Activated CD4-positive, alpha-beta T cell treated with anti-CD3 and anti-CD28 coated beads, Interleukin-2, amount 10 ng/mL, durations not matched to agents 24 days and 14 days (primary cell): ENCODE measurements at regions of chr1 and their contacts with region 1.

Region 1: GRCh38 chr1:241592273-241592958 is 47.8 kb downstream of the CHML start:
- DNase-seq: no peak
- H3K4me3 Mint-ChIP-seq: no peak overlapping the region
- H3K27ac Mint-ChIP-seq: peak overlapping the region; percentile 19
- H3K4me1 Mint-ChIP-seq: peaks cover 3% of the 10 kb centered on the region
- H3K27me3 Mint-ChIP-seq: no peaks in the 10 kb centered on the region

Region 2: DNA sequence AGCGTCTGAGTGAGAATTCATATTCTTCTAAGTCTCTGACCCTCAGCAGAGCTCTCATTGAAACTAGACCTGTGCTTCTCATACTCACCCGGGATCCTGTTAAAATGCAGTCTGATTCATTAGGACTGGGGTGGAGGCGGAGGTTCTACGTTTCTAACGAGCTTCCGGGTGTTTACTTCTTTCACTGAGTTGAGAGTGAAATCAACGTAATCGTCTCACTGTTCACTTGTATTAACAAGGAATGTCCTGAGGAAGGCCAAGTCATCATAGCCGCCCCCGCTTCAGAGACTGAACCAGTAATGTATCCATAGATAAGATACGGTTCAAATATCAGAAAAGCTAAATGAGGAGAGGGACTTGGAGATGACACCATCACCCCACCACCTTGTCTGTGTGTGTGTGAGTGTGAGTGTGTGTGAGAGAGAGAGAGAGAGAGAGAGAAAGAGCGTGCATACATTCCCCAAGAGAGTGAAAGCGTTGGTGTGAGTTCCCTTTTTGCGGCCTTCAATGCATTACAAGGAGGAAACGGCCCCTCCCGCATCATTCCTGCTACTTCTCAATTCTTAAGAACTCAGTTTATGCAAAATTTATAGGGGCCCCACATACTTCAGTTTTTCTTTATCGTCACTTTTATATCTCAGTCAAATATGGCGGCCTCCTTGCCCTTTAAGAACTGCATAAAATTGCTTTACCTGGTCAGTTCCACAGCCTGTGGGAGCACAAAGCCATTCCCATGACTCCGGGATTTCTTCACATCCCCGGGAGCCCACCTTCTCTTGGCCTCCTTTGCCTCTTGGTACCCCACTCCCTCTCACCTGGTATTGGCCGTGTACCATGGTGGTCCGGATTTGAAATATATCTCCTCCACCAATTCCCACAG is 40.4 kb before region 1 on chr1:
- intact Hi-C with region 1: loop called (anchors 1 kb)
- DNase-seq: peak; percentile 77
- H3K4me3 Mint-ChIP-seq: peak overlapping the region; percentile 82
- H3K27ac Mint-ChIP-seq: peak overlapping the region; percentile 89
- H3K4me1 Mint-ChIP-seq: peaks cover 15% of the 10 kb centered on the region
- H3K27me3 Mint-ChIP-seq: peaks cover 2% of the 10 kb centered on the region

Region 3: DNA sequence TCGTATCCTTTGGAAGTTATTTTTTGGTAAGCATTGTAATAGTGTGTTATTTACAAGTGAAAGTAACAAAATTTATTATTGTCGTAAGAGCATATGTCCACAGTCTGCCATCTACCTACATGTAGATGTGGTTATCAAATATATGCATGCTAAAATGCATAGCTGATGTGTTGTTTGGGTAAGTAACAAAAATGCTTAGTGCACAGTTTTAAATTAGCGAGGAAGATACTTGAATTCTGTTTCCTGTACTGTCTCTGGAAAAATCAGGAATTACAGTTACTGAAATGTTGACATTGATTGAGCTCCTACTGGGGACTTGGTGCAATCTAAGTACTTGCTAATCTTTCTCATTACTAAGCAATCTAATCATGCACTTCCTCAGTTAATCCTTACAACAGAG is 74.0 kb after region 1 on chr1:
- intact Hi-C with region 1: no loop called
- DNase-seq: no peak
- H3K4me3 Mint-ChIP-seq: no peak overlapping the region
- H3K27ac Mint-ChIP-seq: no peak overlapping the region
- H3K4me1 Mint-ChIP-seq: no peaks in the 10 kb centered on the region
- H3K27me3 Mint-ChIP-seq: peaks cover 3% of the 10 kb centered on the region